ENCODE measurements at regions of chr3 and their contacts with region 1.

Region 1: GRCh38 chr3:183099026-183099837 is at the start of gene MCCC1:
- DNase-seq: peak; percentile 100
- H3K4me3 ChIP-seq: peak within 1 kb of the TSS; percentile 70 to 79
- H3K27ac ChIP-seq: peak within 1 kb of the TSS; percentile 89 to 90
- H3K4me1 ChIP-seq: no peaks in the 10 kb centered on the region
- H3K27me3 ChIP-seq: no peaks in the 10 kb centered on the region
- CTCF ChIP-seq: peak in 2 of 4 experiments; percentile 15 to 29
- POLR2A ChIP-seq: peak; percentile 93
- total RNA-seq, gene MCCC1: 37.5 to 54.6 TPM

Region 2: DNA sequence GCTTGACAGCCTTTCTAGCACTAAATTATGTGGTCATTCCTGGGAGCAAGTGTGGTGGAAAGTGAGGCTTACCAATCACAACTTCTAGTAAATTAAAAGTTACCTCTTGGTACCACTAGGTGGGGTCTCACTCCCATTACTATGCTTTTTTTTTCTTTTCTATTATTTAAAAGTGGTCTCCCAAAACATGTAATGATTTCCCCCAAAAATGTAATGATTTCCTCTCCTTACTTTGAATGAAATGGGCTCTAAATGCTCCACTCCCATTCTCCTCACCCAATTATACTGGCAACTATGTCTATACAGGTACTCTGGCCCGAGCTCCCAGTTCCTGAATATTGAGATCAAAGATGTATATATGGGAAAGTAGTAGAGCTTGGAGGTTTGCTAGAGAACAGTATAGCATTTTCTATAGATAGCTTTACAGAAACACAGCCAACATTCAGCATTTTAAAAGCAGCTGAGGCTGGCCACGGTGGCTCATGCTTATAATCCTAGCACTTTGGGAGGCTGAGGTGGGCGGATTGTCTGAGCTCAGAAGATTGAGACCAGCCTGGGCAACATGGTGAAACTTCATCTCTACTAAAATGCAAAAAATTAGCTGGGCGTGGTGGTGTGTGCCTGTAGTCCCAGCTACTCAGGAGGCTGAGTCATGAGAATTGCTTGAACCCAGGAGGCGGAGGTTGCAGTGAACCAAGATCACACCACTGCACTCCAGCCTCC is 189.8 kb before region 1 on chr3:
- intact Hi-C with region 1: loop called (anchors 10 kb)
- DNase-seq: no peak
- H3K4me3 ChIP-seq: no peak overlapping the region
- H3K27ac ChIP-seq: no peak overlapping the region
- H3K4me1 ChIP-seq: no peaks in the 10 kb centered on the region
- H3K27me3 ChIP-seq: no peaks in the 10 kb centered on the region
- CTCF ChIP-seq: peak in 3 of 4 experiments; percentile 27 to 49 (median 40)
- POLR2A ChIP-seq: no peak

Region 3: DNA sequence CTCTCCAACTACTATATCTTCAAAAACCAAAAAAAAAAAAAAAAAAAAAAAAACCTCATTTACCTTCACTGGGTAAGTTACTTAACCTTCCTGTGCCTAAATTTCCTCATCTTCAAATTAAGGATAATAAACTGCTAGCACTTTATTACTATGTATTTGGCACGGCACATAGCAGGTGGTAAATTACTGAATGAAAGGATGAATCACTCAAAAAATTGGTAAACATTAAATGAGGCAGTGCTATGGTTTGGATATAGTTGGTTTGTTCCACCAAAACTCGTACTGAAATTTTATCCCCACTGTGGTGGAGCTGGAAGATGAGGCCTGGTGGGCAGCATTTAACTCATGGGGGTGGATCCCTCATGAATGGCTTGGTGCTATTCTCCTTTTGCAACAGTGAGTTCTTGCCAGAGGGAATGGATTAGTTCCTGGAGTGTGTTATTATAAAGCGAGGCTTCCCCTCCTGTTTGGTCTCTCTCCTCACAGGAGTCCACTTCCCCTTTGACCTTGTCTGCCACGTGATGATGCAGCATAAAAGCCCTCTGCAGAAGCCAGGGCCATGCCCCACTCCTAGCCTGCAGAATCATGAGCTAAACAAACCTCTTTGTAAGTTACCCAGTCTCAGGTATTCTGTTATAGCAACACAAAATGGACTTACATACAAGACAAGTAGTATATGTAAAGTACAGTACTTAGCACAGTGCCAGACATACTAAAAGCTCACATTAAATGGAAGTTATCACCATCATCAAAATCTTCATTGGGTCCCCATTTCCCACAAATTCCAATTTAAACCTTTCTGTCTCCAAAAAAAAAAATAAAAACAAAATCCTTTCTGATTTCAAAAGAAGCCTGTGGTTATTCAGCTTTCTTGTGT is 139.5 kb before region 1 on chr3:
- intact Hi-C with region 1: loop called (anchors 5 kb)
- DNase-seq: no peak
- H3K4me3 ChIP-seq: no peak overlapping the region
- H3K27ac ChIP-seq: no peak overlapping the region
- H3K4me1 ChIP-seq: no peaks in the 10 kb centered on the region
- H3K27me3 ChIP-seq: no peaks in the 10 kb centered on the region
- CTCF ChIP-seq: no peak
- POLR2A ChIP-seq: no peak

Region 4: DNA sequence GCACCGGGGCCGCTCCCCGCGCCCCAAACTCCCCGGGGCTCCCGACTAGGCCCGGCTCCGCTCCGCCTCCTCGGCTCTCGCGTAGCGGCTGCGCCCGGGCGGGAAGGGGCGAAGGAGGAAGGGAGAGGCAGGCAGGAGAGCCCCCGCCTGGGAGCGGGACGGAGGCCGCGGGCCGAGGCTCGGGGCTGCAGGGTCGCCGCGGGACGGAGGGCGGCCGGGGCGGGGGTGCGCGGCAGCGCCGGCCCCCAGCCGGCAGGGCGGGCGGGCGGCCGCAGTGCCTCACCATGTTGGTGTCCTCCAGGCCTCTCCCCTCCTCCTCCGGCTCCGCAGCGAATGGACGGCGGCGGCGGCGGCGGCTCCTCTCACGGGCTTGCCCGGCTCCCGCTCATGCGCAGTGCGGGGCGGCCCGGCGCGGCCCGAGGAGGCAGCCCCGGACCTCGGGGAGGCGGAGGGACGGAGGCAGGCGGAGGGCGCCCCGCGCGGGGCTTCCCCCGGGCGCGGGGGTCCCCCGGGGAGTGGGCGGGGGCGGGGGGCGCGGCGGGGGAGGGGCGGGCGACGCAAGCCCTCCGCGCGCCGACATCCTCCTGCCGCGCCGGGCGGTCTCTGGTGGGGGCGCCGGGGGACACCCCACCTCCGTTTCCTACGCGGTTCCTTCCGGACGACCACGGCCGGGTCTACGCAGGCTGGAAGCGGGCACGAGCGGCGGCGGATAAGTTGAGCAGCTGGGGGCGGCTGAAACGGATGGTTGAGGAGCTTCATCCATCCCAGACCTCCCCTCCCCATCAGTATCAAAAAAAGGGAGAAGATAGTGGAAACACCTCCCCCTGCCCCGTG is 118.8 kb before region 1 on chr3 and contains the start of gene DCUN1D1:
- intact Hi-C with region 1: loop called (anchors 10 kb)
- DNase-seq: peak; percentile 83
- H3K4me3 ChIP-seq: peak within 1 kb of the TSS; percentile 93 to 96
- H3K27ac ChIP-seq: peak within 1 kb of the TSS; percentile 86
- H3K4me1 ChIP-seq: no peaks in the 10 kb centered on the region
- H3K27me3 ChIP-seq: no peaks in the 10 kb centered on the region
- CTCF ChIP-seq: no peak
- POLR2A ChIP-seq: peak; percentile 61
- total RNA-seq, gene DCUN1D1: 25.5 to 25.6 TPM

Measured in prostate gland (tissue), 2 donors.